A549 (cell line): ENCODE measurements at regions of chr10 and their contacts with region 1.

Region 1: DNA sequence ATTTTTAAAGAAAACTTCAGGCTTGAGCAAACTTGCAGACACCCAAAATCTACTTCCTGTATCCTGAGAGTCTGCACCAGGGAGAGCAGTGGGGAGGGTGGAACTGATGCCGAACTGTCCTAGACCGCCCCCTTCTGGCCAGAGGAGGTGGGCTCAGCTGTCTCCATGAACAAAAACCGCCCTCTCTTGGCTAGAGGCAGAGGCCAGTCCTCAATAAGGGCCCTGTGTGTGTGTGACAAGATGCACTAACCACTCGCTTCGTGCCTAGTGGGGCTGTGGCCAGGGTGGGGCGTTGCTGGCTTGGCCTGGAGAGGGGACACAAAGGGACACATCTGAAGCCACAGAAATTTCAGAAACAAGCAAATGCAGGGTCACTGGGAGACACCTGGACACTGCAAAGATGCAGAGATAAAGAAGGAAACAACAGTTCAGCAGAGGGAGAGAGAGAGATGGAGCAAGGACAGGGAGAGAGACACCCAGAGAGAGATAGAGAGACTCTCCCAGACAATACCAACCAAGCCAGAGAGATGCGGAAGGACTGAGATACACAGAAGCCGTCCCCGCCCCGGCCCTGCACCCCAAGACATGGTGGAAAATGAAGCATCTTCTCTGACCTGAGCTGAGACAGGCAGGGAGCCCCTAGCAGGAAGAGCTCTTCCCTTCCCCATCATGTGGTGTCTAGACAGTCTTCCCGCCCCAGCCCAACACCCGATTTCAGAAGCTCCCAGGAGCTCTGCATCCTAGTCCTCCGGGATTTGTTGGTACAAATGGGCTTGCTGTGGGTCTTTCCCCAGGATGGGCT is 22.7 kb upstream of the FXYD4 start:
- DNase-seq: peak; percentile 87 to 92
- ATAC-seq: peak; percentile 99
- H3K4me3 ChIP-seq: no peak overlapping the region
- H3K27ac ChIP-seq: peak overlapping the region; percentile 56 to 71
- H3K4me1 ChIP-seq: peaks cover 30% of the 10 kb centered on the region
- CTCF ChIP-seq: peak; percentile 97
- EP300 ChIP-seq: no peak
- POLR2A ChIP-seq: no peak
- RAD21 ChIP-seq: peak; percentile 98 to 99

Region 2: GRCh38 chr10:42367532-42368230 is 981.0 kb before region 1 on chr10:
- CTCF ChIA-PET with region 1: no interaction called
- POLR2A ChIA-PET with region 1: no interaction called
- DNase-seq: no peak
- ATAC-seq: no peak
- H3K4me3 ChIP-seq: no peak overlapping the region
- H3K27ac ChIP-seq: no peak overlapping the region
- H3K4me1 ChIP-seq: no peaks in the 10 kb centered on the region
- CTCF ChIP-seq: no peak
- EP300 ChIP-seq: no peak
- POLR2A ChIP-seq: no peak
- RAD21 ChIP-seq: no peak

Region 3: GRCh38 chr10:43204943-43205671 is 143.6 kb before region 1 on chr10:
- CTCF ChIA-PET with region 1: interaction called, 10 read pairs
- POLR2A ChIA-PET with region 1: no interaction called
- DNase-seq: peak; percentile 68 to 81
- ATAC-seq: peak; percentile 78 to 86
- H3K4me3 ChIP-seq: no peak overlapping the region
- H3K27ac ChIP-seq: peak overlapping the region in 1 of 2 experiments; percentile 10; a peak in 1 of 6 replicates
- H3K4me1 ChIP-seq: no peaks in the 10 kb centered on the region
- CTCF ChIP-seq: peak; percentile 83
- EP300 ChIP-seq: no peak
- POLR2A ChIP-seq: no peak
- RAD21 ChIP-seq: peak; percentile 46 to 56

Region 4: GRCh38 chr10:43304687-43305340 is 43.9 kb before region 1 on chr10:
- CTCF ChIA-PET with region 1: interaction called, 30 read pairs
- POLR2A ChIA-PET with region 1: interaction called, 3 read pairs
- DNase-seq: peak; percentile 43 to 46
- ATAC-seq: peak; percentile 80
- H3K4me3 ChIP-seq: peak overlapping the region; percentile 39
- H3K27ac ChIP-seq: peak overlapping the region; percentile 63 to 86
- H3K4me1 ChIP-seq: peaks cover 19% of the 10 kb centered on the region
- CTCF ChIP-seq: no peak
- EP300 ChIP-seq: no peak
- POLR2A ChIP-seq: no peak
- RAD21 ChIP-seq: no peak

Region 5: DNA sequence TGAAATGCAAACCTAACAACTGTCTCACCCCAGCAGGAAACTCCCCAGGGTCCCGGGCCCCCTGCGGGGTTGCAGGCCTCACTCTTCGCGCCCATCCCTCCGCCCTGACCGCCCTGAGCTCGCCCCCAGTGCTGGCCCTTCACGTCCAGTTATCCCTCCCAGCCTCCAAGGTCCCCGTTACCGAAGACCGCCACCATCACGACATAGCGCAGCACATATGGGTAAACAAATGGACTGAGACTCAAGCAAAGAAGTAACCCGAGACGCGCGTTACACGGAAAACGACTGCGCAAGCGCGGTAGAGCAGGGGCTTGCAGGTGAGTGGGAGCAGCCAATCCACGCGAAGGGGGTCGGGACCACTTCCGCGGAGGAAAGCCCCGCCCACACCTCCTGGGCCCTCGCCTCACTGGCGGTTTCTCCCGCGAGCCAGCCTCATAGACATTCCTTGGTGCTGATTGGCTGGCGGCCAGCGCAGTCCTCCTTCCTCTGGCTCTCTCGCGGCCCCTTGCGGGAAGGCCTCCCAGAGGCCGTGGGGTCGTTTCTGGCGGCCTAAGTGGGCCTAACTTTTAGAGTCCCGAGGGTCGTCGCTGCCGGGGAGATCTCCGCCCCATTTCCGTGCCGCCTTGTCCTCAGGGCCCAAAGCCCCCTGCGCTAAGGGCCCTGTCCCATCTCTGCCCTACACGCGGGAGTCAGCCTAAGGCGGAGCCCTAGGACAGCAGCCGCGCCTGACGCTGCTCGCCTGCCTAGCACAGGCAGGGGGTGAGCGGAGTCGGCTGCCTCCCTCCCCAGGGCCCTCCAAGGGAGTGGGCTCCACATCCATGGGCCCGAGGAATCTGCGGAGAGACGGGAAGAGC is 13.5 kb after region 1 on chr10:
- CTCF ChIA-PET with region 1: interaction called, 15 read pairs
- POLR2A ChIA-PET with region 1: no interaction called
- DNase-seq: peak; percentile 86 to 97
- ATAC-seq: peak; percentile 95 to 98
- H3K4me3 ChIP-seq: peak overlapping the region; percentile 63
- H3K27ac ChIP-seq: peak overlapping the region; percentile 79 to 96
- H3K4me1 ChIP-seq: peaks cover 11% of the 10 kb centered on the region
- CTCF ChIP-seq: peak; percentile 50
- EP300 ChIP-seq: no peak
- POLR2A ChIP-seq: peak; percentile 40
- RAD21 ChIP-seq: peak; percentile 41 to 51

Region 6: DNA sequence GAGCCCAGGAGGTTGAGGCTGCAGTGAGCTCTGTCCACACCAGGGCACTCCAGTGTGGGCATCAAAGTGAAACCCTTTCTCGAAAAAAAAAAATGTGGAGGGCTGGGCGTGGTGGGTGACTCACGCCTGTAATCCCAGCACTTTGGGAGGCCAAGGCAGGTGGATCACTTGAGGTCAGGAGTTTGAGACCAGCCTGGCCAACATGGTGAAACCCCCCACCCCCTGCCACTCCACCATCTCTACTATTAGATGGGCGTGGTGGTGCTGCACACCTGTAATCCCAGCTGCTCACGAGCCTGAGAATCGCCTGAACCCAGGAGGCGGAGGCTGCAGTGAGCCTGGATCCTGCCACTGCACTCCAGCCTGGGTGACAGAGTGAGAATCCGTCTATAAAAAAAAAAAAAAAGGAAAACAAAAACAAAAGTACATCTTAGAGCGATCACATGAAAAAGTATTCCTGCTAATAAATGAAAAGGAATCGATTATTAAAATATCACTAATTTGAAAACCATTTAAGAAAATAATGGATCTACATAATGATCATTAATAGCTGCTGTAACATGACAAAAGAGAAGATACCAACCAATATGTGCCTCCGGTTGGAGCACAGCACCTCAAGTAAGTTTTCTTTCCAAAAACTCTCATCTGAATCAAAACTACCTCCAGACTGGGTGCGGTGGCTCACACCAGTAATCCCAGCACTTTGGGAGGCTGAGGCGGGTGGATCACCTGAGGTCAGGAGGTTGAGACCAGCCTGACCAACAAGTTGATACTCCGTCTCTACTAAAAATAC is 55.4 kb after region 1 on chr10:
- CTCF ChIA-PET with region 1: no interaction called
- POLR2A ChIA-PET with region 1: no interaction called
- DNase-seq: no peak
- ATAC-seq: no peak
- H3K4me3 ChIP-seq: peak overlapping the region; percentile 11; the same call in 2 of the 3 replicates
- H3K27ac ChIP-seq: peak overlapping the region in 1 of 2 experiments; percentile 54; a peak in 3 of 6 replicates
- H3K4me1 ChIP-seq: peaks cover 70% of the 10 kb centered on the region
- CTCF ChIP-seq: no peak
- EP300 ChIP-seq: no peak
- POLR2A ChIP-seq: no peak
- RAD21 ChIP-seq: no peak

Region 7: GRCh38 chr10:43461950-43462349 is 113.2 kb after region 1 on chr10:
- CTCF ChIA-PET with region 1: interaction called, 11 read pairs
- POLR2A ChIA-PET with region 1: no interaction called
- DNase-seq: peak; percentile 55 to 86
- ATAC-seq: peak; percentile 89 to 91
- H3K4me3 ChIP-seq: no peak overlapping the region
- H3K27ac ChIP-seq: no peak overlapping the region
- H3K4me1 ChIP-seq: peaks cover 5% of the 10 kb centered on the region; the same call in 1 of the 3 replicates
- CTCF ChIP-seq: peak; percentile 89
- EP300 ChIP-seq: no peak
- POLR2A ChIP-seq: no peak
- RAD21 ChIP-seq: peak; percentile 80 to 81

Region 8: DNA sequence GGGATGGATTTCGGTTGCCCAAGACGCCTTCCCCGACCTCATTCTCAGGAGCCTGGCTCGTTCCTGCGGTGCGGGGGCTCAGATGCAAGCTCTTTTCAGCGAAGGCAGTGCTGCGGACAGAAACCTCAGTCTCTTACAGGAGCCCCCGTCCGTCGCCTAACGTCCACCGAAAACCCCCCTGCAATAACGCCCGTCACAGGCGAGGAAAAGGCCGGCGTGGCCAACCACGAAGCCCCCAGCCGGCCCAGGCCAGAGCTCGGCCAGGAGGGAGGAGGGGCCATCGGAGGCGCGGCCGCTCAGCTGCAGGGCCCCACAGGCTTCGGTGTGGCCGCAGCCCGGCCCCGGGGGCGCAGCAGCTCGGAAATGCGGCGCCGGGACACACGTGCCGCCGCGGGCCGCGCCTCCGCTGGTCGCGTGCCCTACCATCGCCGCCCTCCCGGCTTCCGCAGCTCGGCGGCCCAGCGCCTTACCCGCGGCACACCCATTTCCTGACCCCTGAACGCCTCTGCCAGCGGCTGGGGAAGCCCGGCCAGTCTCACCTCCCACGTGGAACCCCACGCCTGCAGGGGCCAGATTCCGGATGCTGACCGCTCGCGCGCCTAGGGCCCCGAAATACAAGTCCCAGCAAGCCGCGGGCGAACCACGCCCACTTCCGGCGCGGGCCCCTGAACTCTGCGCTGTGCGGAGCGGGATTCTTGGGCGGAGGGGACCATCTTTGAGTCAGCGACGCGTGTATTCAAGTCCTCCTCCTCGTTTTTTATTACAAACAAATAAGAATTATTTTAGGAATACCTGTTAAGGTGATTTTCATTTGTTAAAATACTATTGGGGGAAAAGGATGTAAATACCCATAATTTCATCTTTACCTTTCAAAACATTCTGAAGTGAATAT is 225.5 kb after region 1 on chr10 and contains the start of gene ZNF239:
- CTCF ChIA-PET with region 1: no interaction called
- POLR2A ChIA-PET with region 1: no interaction called
- DNase-seq: peak; percentile 27 to 81
- ATAC-seq: peak; percentile 95 to 99
- H3K4me3 ChIP-seq: peak within 1 kb of the TSS; percentile 64
- H3K27ac ChIP-seq: peak within 1 kb of the TSS; percentile 71 to 90
- H3K4me1 ChIP-seq: no peaks in the 10 kb centered on the region
- CTCF ChIP-seq: no peak
- EP300 ChIP-seq: no peak
- POLR2A ChIP-seq: no peak
- RAD21 ChIP-seq: no peak
- polyA plus RNA-seq, gene ZNF239: 4.7 and 6.0 TPM in 2 replicates